GM12878 (cell line): ENCODE measurements at regions of chr6 and their contacts with region 1.

Region 1: GRCh38 chr6:10747251-10747972 is at the start of gene TMEM14B:
- DNase-seq: peak; percentile 90
- ATAC-seq: peak; percentile 98
- H3K4me3 ChIP-seq: peak within 1 kb of the TSS; percentile 87
- H3K27ac ChIP-seq: peak within 1 kb of the TSS; percentile 69
- H3K4me1 ChIP-seq: peaks cover 5% of the 10 kb centered on the region; the same call in 1 of the 2 replicates
- H3K27me3 ChIP-seq: no peaks in the 10 kb centered on the region
- CTCF ChIP-seq: no peak
- EP300 ChIP-seq: no peak
- POLR2A ChIP-seq: peak; percentile 94
- RAD21 ChIP-seq: no peak
- polyA plus RNA-seq, gene TMEM14B: 366 to 399 TPM

Region 2: DNA sequence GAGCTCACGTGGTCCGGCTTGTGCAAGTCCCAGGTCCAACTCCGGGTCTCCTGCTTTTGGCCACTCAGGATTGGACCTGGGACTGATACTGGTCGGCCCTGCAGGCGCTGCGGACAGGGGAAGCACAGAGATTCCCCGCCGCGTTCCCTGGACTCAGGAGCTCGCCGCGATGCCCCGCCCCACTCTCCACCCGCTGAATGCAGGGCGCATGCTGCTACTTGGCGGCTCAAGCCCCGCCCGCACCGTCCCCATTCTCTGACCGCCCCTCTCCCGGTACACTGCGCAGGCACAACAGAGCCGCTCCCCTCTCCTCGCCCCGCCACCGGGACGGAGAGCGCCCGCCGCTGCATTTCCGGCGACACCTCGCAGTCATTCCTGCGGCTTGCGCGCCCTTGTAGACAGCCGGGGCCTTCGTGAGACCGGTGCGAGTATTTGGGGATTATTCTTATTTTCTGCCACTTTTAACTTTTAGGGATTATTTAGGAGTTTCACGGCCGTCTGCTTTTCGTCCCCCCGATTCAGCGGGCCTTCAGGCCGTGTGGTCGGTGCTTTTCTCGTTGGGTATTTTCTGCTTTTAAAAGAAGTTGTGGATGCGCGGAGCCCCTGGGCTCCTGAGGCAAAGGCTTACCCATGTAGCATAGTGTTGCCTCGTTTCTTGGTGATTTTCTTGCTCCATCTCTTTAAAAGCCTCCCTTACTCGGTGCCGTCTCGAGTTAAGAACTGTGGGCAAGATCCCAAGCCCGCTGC is 24.4 kb before region 1 on chr6 and contains the start of gene TMEM14C:
- CTCF ChIA-PET with region 1: interaction called, 11 read pairs
- POLR2A ChIA-PET with region 1: interaction called, 32 read pairs
- RAD21 ChIA-PET with region 1: interaction called, 12 read pairs
- SMC1A ChIA-PET with region 1: interaction called, 46 read pairs
- in situ Hi-C with region 1: no loop called
- intact Hi-C with region 1: loop called (anchors 1 kb)
- DNase-seq: peak; percentile 71
- ATAC-seq: peak; percentile 99
- H3K4me3 ChIP-seq: peak within 1 kb of the TSS; percentile 97
- H3K27ac ChIP-seq: peak within 1 kb of the TSS; percentile 63
- H3K4me1 ChIP-seq: peaks cover 4% of the 10 kb centered on the region
- H3K27me3 ChIP-seq: no peaks in the 10 kb centered on the region
- CTCF ChIP-seq: no peak
- EP300 ChIP-seq: peak; percentile 7 to 36; a peak in 1 of 4 replicates
- POLR2A ChIP-seq: peak; percentile 85
- RAD21 ChIP-seq: no peak
- polyA plus RNA-seq, gene TMEM14C: 169 to 224 TPM

Region 3: DNA sequence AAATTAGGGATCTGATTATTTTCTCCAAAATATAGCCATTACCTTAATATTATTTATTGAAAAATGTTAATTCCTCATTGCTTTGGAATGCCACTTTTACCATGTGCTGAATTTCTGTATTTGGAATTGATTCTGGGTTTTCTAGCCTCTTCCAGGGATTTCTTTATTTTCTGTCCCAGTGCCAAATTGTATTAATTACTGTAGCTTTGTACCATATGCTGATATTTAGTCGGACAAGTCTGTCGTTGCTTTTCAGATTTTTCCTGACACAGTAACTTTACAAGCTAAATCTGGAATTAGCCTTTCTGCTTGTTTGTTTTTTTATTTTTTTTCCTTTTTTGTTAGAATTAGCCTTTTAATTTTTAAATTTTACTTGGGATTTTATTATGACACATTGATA is 10.7 kb before region 1 on chr6:
- CTCF ChIA-PET with region 1: interaction called, 5 read pairs
- POLR2A ChIA-PET with region 1: no interaction called
- RAD21 ChIA-PET with region 1: no interaction called
- SMC1A ChIA-PET with region 1: interaction called, 19 read pairs
- in situ Hi-C with region 1: no loop called
- intact Hi-C with region 1: no loop called
- DNase-seq: no peak
- ATAC-seq: no peak
- H3K4me3 ChIP-seq: no peak overlapping the region
- H3K27ac ChIP-seq: no peak overlapping the region
- H3K4me1 ChIP-seq: no peaks in the 10 kb centered on the region
- H3K27me3 ChIP-seq: no peaks in the 10 kb centered on the region
- CTCF ChIP-seq: no peak
- EP300 ChIP-seq: no peak
- POLR2A ChIP-seq: no peak
- RAD21 ChIP-seq: no peak